T-cell (primary cell): ENCODE measurements at regions of chr7 and their contacts with region 1.

Region 1: GRCh38 chr7:123738356-123738755 is 10.4 kb downstream of the WASL start:
- DNase-seq: no peak
- ATAC-seq: no peak
- H3K4me3 ChIP-seq: no peak overlapping the region
- H3K4me3 Mint-ChIP-seq: no peak overlapping the region
- H3K27ac ChIP-seq: no peak overlapping the region
- H3K27ac Mint-ChIP-seq: no peak overlapping the region
- H3K4me1 ChIP-seq: peaks cover 0 to 6% of the 10 kb centered on the region in 2 experiments
- H3K4me1 Mint-ChIP-seq: peaks cover 51 to 55% (median 54%) of the 10 kb centered on the region in 3 donors
- H3K27me3 ChIP-seq: no peaks in the 10 kb centered on the region
- H3K27me3 Mint-ChIP-seq: no peaks in the 10 kb centered on the region

Region 2: GRCh38 chr7:123669485-123669884 is 68.9 kb before region 1 on chr7:
- CTCF ChIA-PET with region 1: no interaction called
- POLR2A ChIA-PET with region 1: no interaction called
- DNase-seq: no peak
- ATAC-seq: no peak
- H3K4me3 ChIP-seq: no peak overlapping the region
- H3K4me3 Mint-ChIP-seq: no peak overlapping the region
- H3K27ac ChIP-seq: no peak overlapping the region
- H3K27ac Mint-ChIP-seq: no peak overlapping the region
- H3K4me1 ChIP-seq: no peaks in the 10 kb centered on the region
- H3K4me1 Mint-ChIP-seq: no peaks in the 10 kb centered on the region
- H3K27me3 ChIP-seq: peaks cover 0 to under 1% of the 10 kb centered on the region in 2 experiments
- H3K27me3 Mint-ChIP-seq: peaks cover 0 to 1% of the 10 kb centered on the region in 2 donors

Region 3: DNA sequence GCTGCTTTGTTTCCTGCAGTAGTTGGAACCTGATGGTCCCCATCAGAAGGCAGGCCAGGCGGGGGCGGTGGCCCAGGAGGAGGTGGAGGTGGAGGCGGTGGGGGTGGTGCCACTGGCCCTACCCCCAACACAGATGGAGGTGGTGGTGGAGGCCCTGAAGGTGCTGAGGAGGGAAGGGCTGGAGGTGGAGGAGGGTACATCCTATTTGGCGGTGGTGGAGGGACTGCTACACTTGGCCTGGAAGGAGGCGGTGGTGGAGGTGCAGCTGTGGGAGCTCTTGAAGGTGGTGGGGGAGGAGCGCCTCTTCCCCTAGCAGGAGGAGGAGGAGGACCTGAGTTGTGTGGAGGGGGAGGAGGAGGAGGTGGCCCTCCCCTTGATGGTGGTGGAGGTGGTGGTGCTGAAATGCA is 45.9 kb before region 1 on chr7:
- CTCF ChIA-PET with region 1: interaction called in 1 of 2 experiments, 5 read pairs
- POLR2A ChIA-PET with region 1: interaction called in 1 of 2 experiments, 14 read pairs
- DNase-seq: no peak
- ATAC-seq: no peak
- H3K4me3 ChIP-seq: no peak overlapping the region
- H3K4me3 Mint-ChIP-seq: no peak overlapping the region
- H3K27ac ChIP-seq: no peak overlapping the region
- H3K27ac Mint-ChIP-seq: no peak overlapping the region
- H3K4me1 ChIP-seq: no peaks in the 10 kb centered on the region
- H3K4me1 Mint-ChIP-seq: no peaks in the 10 kb centered on the region
- H3K27me3 ChIP-seq: no peaks in the 10 kb centered on the region
- H3K27me3 Mint-ChIP-seq: no peaks in the 10 kb centered on the region